PC-9 (cell line): ENCODE measurements at regions of chr9 and their contacts with region 1.

Region 1: DNA sequence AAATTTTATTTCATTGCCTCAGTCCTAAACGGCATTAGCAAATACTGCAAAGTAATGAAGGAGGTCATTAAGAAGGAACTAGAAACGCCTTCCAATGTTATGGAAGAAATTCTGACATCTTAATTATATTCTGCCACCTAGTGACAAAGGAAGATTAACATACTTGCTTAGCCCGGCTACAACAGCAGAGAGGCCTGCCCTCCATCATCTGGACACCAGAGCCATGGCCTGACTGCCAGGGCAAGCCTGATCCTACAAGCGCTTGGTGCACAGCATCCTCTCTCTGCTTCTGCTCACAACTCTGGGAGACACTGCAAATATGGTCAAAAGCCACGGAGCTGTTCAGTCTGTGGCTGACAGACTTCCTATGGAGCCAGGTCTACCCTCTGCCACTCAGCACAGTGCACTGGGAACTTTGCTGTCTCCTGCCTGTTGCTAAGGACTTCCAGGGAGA is 87.3 kb upstream of the SLC44A1 start:
- DNase-seq: peak; percentile 52 to 71
- H3K4me3 ChIP-seq: no peak overlapping the region
- H3K27ac ChIP-seq: no peak overlapping the region
- H3K4me1 ChIP-seq: peaks cover 24% of the 10 kb centered on the region
- H3K27me3 ChIP-seq: no peaks in the 10 kb centered on the region
- CTCF ChIP-seq: peak; percentile 71

Region 2: DNA sequence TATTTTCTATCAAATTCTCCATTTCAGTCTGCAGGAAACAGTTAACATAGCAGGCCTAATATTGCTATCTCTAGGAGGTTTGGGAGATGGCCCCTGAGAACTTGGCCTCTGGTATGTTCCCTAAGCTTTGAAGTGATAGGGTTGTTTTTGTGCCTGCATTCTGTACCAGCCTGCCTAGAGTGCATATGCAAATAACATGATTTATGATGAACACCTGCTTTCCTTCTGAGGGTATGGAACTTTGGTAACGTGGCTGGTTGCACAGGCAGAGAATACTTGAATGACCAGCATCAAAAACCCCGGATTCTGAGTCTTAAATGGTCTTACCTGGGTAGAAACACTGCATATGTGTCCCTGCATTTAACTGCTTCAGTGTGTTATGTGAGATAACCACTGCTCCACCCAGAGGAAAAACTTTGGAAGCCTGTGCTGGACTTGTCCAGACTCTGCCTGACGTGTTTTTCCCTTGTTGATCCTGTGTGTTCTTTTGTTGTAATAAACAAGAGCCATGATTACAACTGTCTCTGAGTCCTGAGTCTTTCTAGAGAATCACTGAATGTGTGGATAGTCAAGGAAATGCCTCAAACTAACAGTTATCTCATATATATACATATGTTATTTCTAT is 117.9 kb before region 1 on chr9:
- CTCF ChIA-PET with region 1: no interaction called
- POLR2A ChIA-PET with region 1: no interaction called
- intact Hi-C with region 1: no loop called
- DNase-seq: no peak
- H3K4me3 ChIP-seq: no peak overlapping the region
- H3K27ac ChIP-seq: no peak overlapping the region
- H3K4me1 ChIP-seq: no peaks in the 10 kb centered on the region
- H3K27me3 ChIP-seq: no peaks in the 10 kb centered on the region
- CTCF ChIP-seq: no peak

Region 3: DNA sequence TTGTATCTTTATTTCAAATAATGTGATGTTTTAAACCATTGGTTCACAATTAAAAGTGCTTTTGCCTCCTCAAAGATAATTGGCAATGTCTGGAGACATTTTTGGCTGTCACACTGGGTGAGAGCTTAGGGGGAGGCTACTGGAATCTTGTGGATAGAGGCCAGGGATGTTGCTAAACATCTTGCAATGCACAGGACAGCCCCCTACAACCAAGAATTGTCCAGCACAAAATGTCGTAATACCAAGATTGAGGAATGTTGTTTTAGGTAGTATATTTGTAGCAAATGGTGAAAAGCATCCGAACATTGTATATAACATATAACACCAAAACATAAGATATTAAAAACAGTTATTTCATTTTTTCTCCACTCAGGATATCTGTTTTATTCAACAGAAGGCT is 187.1 kb after region 1 on chr9:
- CTCF ChIA-PET with region 1: no interaction called
- POLR2A ChIA-PET with region 1: no interaction called
- intact Hi-C with region 1: no loop called
- DNase-seq: no peak
- H3K4me3 ChIP-seq: no peak overlapping the region
- H3K27ac ChIP-seq: no peak overlapping the region
- H3K4me1 ChIP-seq: no peaks in the 10 kb centered on the region
- H3K27me3 ChIP-seq: no peaks in the 10 kb centered on the region
- CTCF ChIP-seq: no peak

Region 4: DNA sequence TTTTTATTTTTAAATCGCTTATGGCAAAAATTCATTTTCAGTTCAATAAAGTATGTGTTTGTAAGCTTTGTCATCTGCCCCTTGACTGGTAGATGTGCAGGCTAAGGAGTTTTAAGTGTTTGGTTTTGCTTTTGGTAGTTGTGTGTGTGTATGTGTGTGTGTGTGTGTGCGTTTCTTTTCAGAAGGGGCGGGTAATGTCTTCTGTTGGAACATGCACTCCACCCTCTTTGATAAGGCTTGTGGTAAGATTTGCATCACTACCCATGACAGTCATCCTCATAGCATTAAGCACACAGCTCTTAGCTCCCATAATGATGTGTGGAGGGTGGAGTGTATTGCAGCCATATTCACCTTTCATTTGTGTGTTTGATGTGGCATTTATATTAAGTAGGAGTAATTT is 198.6 kb after region 1 on chr9:
- CTCF ChIA-PET with region 1: no interaction called
- POLR2A ChIA-PET with region 1: no interaction called
- intact Hi-C with region 1: loop called (anchors 5 kb)
- DNase-seq: no peak
- H3K4me3 ChIP-seq: no peak overlapping the region
- H3K27ac ChIP-seq: no peak overlapping the region
- H3K4me1 ChIP-seq: no peaks in the 10 kb centered on the region
- H3K27me3 ChIP-seq: no peaks in the 10 kb centered on the region
- CTCF ChIP-seq: no peak

Region 5: GRCh38 chr9:105414947-105415661 is 257.9 kb after region 1 on chr9:
- CTCF ChIA-PET with region 1: no interaction called
- POLR2A ChIA-PET with region 1: no interaction called
- intact Hi-C with region 1: loop called (anchors 1 kb)
- DNase-seq: peak in 1 of 2 experiments; percentile 45
- H3K4me3 ChIP-seq: no peak overlapping the region
- H3K27ac ChIP-seq: no peak overlapping the region
- H3K4me1 ChIP-seq: 0 out of 2 replicates have a peak, but pooled peaks cover 3% of the 10 kb centered on the region
- H3K27me3 ChIP-seq: no peaks in the 10 kb centered on the region
- CTCF ChIP-seq: peak; percentile 98